ENCODE measurements at regions of chr1 and their contacts with region 1.

Region 1: DNA sequence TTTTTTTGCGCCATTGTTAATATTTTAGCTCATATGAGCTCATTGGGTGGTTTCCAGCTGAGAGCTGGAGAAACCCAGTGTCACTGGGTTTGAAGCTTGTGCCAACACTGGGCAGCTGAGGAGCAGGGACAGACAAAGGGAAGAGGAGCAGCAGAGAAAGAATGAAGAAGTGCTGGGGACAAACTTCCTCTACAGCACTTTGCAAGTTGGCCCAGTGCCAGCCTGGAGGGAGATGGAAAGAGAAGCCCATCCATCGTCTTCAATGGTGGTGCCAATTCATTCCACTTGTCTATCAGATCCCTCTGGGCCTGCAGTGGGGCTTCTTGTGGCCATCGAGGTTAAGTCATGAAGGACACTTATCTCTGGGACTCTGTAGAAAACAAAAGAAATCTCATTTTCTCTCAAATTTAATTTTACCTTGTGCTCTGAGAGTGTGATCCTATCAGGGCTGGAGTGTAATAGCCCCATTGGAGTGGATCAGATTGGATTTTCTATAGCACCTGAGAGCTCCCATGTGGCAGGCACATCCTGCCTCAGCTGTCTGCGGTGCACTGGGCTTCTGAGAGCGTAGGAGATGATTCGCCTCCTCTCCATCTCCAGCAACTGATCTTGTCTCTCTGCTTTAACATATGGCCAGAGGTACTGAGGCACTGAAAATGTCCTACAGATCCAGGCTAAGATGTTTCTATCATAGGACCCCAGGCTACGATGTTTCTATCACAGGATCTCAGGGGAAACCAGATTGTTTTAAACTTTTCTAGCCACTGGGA is 114.7 kb downstream of the TNR start:
- DNase-seq: peak in 1 of 2 donors; percentile 30
- H3K4me3 ChIP-seq: no peak overlapping the region
- CTCF ChIP-seq: no peak
- POLR2A ChIP-seq: no peak

Region 2: DNA sequence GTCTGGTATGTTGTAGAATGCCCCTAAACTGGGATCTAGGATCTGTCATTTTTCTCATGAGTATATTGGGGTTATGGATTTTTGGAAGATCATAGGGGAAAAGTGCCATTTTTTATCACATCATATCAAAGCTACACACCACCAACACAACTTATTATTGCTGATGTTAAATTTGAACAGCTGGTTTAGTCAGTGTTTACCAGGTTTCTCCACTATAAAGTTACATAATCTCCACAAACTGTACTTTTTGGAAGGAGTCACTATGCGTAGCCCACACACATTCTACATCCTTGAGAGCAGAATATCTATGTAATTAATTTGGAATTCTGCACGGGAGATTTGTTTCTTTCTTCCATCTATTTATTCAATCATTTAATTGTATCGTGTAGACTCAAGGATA is 1641.8 kb before region 1 on chr1:
- intact Hi-C with region 1: loop called (anchors 5 kb)
- DNase-seq: no peak
- H3K4me3 ChIP-seq: no peak overlapping the region
- CTCF ChIP-seq: no peak
- POLR2A ChIP-seq: no peak

Region 3: GRCh38 chr1:175690298-175690697 is 61.6 kb after region 1 on chr1:
- intact Hi-C with region 1: no loop called
- DNase-seq: peak in 1 of 2 donors; percentile 8
- H3K4me3 ChIP-seq: no peak overlapping the region
- CTCF ChIP-seq: no peak
- POLR2A ChIP-seq: no peak

Measured in lower leg skin (tissue), 4 donors.